ENCODE measurements at regions of chr12 and their contacts with region 1.

Region 1: GRCh38 chr12:9773216-9773877 is 12.6 kb upstream of the CD69 start:
- DNase-seq: no peak
- H3K4me3 Mint-ChIP-seq: no peak overlapping the region
- H3K27ac Mint-ChIP-seq: no peak overlapping the region
- H3K4me1 Mint-ChIP-seq: peaks cover 78% of the 10 kb centered on the region
- H3K27me3 Mint-ChIP-seq: no peaks in the 10 kb centered on the region

Region 2: DNA sequence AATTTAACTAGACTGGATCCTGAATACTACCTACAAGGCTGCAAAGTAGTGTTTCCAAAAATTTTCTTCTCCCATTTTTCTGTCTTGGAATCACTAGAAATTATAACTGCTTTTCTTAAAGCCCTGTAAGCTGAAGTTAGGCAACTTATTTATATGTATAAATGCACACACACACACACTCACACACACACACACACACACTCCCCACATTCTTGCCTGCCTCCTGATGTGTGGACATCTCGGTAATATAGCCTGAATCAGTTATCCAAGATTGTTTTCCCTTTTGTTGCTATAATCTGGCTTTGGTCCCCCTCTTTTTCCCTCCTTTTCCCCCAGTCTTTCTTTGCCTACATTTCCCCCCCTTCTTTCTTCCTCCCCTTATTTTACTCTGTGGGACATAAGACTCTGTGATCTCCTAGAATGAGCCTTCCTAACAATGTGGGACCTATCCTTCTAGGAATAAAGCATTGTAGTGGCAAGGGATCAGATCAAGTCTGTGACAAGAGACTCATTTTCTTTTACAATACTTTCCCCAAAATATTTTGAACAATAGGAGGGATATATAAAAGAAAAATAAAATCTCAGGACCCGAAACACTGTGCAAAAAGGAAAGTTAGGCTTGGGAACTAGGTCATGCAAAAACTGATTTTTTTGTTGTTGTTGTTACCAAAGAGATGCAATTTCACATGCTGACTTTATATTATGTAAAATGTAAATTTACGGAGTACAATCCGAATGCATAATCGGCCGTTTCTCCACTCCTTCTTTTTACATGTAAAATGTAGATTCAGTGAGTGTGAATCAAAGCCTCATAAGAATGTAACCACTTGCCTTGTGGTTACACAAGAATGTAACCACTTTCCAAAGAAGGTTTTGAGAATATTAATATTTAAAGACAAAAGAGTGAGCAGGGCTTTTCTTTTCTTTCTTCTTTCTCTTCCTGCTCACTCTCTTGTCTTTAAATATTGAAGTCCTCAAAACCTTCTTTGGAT is 13.7 kb after region 1 on chr12:
- intact Hi-C with region 1: loop called (anchors 1 kb)
- DNase-seq: no peak
- H3K4me3 Mint-ChIP-seq: no peak overlapping the region
- H3K27ac Mint-ChIP-seq: no peak overlapping the region
- H3K4me1 Mint-ChIP-seq: peaks cover 16% of the 10 kb centered on the region
- H3K27me3 Mint-ChIP-seq: no peaks in the 10 kb centered on the region

Measured in activated T-helper 1 cell treated with anti-CD3 and anti-CD28 coated beads, Interleukin-12 subunit alpha, Interleukin-12 subunit beta, Interleukin-2, Interleukin-4 antibody, amounts not matched to agents 30 ng/mL and 10 ng/mL and 1 ng/mL, durations not matched to agents 14 hours and 24 hours and 36 hours (primary cell).